OCI-LY7 (cell line): ENCODE measurements at regions of chr20 and their contacts with region 1.

Region 1: GRCh38 chr20:48620519-48621254 is 207.1 kb downstream of the PREX1 start:
- DNase-seq: peak; percentile 77
- H3K4me3 ChIP-seq: no peak overlapping the region
- H3K27ac ChIP-seq: no peak overlapping the region
- H3K4me1 ChIP-seq: peaks cover 4% of the 10 kb centered on the region
- CTCF ChIP-seq: peak; percentile 82

Region 2: DNA sequence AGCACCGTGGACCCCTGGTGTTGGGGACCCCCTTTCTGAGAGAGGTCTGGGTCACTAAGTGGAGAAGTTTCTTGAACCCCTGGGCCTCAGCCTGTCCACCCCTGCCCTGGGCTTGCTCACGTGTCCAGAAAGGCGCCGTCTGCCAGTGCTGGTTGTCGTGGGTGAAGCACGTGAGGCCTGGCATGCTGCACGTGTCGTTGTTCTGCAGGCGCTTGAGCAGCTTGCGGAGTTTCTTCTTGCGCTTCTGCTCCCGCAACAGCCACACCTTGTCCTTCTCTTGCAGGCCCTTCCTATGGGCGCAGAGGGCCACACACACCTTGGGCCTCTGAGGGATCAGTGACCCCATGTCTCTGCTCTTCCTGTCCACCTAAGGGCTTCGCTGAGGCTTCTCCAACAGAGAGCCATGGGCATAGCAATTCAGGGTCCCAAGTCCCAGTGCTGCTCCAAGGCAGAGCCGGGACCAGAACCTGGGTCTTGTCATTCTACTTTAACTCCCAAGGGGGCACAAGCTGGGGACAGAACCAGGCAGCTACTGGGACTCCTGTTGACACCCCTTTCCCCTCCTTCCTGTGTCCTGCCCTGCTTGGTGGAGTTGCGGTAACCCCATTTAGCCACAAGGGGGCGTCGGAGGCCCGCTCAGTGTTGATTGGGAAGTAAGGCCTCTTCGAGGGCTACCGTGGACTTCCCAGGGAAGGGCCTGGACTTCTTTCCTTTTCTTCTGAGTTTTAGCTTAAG is 957.2 kb before region 1 on chr20:
- CTCF ChIA-PET with region 1: no interaction called
- POLR2A ChIA-PET with region 1: no interaction called
- intact Hi-C with region 1: loop called (anchors 5 kb)
- DNase-seq: peak; percentile 65
- H3K4me3 ChIP-seq: no peak overlapping the region
- H3K27ac ChIP-seq: no peak overlapping the region
- H3K4me1 ChIP-seq: no peaks in the 10 kb centered on the region
- CTCF ChIP-seq: peak; percentile 96

Region 3: GRCh38 chr20:47677635-47678453 is 942.8 kb before region 1 on chr20:
- CTCF ChIA-PET with region 1: no interaction called
- POLR2A ChIA-PET with region 1: no interaction called
- intact Hi-C with region 1: loop called (anchors 1 kb)
- DNase-seq: peak; percentile 72
- H3K4me3 ChIP-seq: no peak overlapping the region
- H3K27ac ChIP-seq: no peak overlapping the region
- H3K4me1 ChIP-seq: no peaks in the 10 kb centered on the region
- CTCF ChIP-seq: peak; percentile 90

Region 4: DNA sequence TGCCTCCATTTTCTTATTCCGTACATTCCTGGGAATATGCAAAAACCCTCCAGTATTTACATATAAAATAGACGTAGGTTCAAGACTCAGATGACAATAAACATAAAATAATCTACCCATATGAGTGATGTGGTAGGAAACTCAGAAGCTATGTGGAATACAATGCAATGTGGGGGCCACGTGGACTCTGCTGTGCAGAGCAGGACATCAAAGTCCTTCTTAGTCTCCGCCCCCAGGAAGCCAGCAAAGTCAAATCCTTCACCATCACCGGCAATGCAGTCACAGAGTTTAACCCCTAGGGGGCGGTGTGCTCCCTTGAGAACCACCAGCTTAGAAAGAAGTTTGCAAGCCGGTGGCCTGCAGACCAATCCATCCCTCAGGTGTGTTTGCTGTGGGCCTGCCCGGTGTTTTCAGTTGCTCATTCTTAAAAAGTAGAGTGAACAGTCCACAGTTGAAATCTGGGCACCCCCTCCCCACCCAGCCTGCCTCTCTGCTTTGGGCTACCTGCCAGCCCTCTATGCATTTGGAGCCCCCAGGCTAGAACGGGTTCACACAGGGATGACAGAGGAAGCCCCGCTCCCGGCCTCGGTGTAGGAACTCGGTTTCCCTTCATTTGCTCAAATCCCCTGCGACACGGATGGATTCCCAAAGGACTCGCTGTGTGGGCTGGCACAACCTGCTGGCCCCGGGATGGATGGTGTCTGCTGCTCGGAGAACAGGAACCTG is 895.3 kb before region 1 on chr20:
- CTCF ChIA-PET with region 1: no interaction called
- POLR2A ChIA-PET with region 1: no interaction called
- intact Hi-C with region 1: loop called (anchors 1 kb)
- DNase-seq: peak; percentile 92
- H3K4me3 ChIP-seq: no peak overlapping the region
- H3K27ac ChIP-seq: no peak overlapping the region
- H3K4me1 ChIP-seq: peaks cover 34% of the 10 kb centered on the region
- CTCF ChIP-seq: peak; percentile 98

Region 5: GRCh38 chr20:47857566-47858471 is 762.9 kb before region 1 on chr20:
- CTCF ChIA-PET with region 1: no interaction called
- POLR2A ChIA-PET with region 1: no interaction called
- intact Hi-C with region 1: loop called (anchors 2 kb)
- DNase-seq: peak; percentile 18
- H3K4me3 ChIP-seq: no peak overlapping the region
- H3K27ac ChIP-seq: no peak overlapping the region
- H3K4me1 ChIP-seq: peaks cover 17% of the 10 kb centered on the region
- CTCF ChIP-seq: no peak

Region 6: GRCh38 chr20:47973519-47974233 is 647.0 kb before region 1 on chr20:
- CTCF ChIA-PET with region 1: no interaction called
- POLR2A ChIA-PET with region 1: no interaction called
- intact Hi-C with region 1: loop called (anchors 5 kb)
- DNase-seq: no peak
- H3K4me3 ChIP-seq: no peak overlapping the region
- H3K27ac ChIP-seq: no peak overlapping the region
- H3K4me1 ChIP-seq: peaks cover 64% of the 10 kb centered on the region
- CTCF ChIP-seq: no peak

Region 7: GRCh38 chr20:48329635-48330277 is 290.9 kb before region 1 on chr20:
- CTCF ChIA-PET with region 1: no interaction called
- POLR2A ChIA-PET with region 1: no interaction called
- intact Hi-C with region 1: loop called (anchors 5 kb)
- DNase-seq: peak; percentile 29
- H3K4me3 ChIP-seq: no peak overlapping the region
- H3K27ac ChIP-seq: no peak overlapping the region
- H3K4me1 ChIP-seq: no peaks in the 10 kb centered on the region
- CTCF ChIP-seq: peak; percentile 68

Region 8: DNA sequence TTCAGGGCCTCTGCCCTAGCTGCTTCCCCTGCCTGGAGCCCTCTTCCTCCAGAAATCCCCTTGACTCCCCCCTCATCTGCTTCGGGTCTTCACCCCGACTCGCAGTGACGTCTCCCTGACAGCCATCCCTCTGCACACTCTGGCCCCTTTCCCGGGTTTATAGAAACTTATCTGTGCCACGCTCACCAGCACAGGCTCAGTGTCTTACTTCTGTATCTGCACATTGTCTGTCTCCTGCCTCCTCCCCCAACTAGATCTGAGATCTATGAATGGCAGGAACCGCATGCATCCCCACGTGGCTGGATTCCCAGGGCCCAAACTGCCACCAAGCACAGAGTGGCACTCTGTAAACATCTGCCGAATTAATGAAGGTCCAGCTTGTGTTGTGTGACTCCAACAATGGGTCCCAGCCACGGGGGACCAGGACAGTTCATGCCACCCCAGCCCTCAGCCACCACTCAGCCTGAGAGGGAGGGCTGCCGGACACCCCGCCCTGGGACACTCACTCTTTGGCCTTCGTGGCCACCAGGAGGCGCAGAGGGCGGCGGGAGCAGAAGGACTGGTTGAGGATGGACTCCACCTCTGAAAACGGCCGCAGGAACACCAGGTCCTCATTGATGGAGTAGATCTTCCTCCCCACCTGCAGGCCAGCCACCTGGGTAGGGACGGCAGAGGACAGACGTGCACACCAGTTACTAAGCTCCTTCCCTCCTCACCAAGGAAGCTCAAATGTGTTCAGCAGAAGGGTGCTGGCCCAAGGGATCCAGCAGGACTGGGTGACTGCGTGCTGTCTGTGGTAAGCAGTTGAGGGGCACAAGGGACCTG is 36.1 kb after region 1 on chr20:
- CTCF ChIA-PET with region 1: no interaction called
- POLR2A ChIA-PET with region 1: no interaction called
- intact Hi-C with region 1: no loop called
- DNase-seq: no peak
- H3K4me3 ChIP-seq: no peak overlapping the region
- H3K27ac ChIP-seq: no peak overlapping the region
- H3K4me1 ChIP-seq: no peaks in the 10 kb centered on the region
- CTCF ChIP-seq: 0 out of 2 replicates have a peak, but pooled peaks have one; percentile 31